BJ (cell line): ENCODE measurements at regions of chr2 and their contacts with region 1.

Region 1: GRCh38 chr2:20446917-20447436 is at the start of gene RHOB:
- DNase-seq: peak; percentile 93
- H3K4me3 ChIP-seq: peak within 1 kb of the TSS; percentile 80
- H3K27me3 ChIP-seq: no peaks in the 10 kb centered on the region
- CTCF ChIP-seq: no peak
- polyA plus RNA-seq, gene RHOB: 76.7 and 87.2 TPM in 2 replicates

Region 2: DNA sequence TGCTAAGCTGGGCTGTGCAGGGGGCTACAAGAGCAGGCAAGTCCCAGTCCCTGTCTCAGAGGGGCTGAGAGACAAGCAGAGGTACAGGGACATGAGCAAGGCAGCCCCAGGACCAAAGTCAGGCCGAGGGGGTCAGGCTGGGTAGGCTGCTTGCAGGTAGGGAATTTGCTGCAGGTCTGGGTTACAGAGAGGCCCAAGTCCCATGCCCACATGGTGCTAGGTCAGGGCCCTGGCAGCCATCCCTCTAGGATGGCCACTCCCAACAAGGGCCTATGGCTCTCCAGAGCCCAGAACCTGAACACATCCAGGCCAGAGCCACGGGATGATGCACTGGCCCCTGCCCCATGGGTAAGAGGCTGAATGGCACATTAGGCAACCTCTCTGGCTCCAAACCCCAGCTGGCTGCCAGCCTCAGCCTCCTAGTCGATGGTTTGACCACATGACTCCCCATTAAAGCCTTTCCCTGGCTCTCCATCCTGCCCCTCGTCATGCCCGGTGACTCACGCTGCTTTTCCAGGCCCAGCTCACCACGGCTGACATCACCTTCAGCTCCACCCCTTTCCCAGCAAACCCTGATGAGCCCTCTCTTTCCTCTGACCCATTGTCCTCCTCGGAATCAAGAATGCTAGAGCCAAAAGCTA is 305.7 kb before region 1 on chr2:
- CTCF ChIA-PET with region 1: no interaction called
- POLR2A ChIA-PET with region 1: no interaction called
- DNase-seq: peak; percentile 73
- H3K4me3 ChIP-seq: no peak overlapping the region
- H3K27me3 ChIP-seq: no peaks in the 10 kb centered on the region
- CTCF ChIP-seq: no peak

Region 3: DNA sequence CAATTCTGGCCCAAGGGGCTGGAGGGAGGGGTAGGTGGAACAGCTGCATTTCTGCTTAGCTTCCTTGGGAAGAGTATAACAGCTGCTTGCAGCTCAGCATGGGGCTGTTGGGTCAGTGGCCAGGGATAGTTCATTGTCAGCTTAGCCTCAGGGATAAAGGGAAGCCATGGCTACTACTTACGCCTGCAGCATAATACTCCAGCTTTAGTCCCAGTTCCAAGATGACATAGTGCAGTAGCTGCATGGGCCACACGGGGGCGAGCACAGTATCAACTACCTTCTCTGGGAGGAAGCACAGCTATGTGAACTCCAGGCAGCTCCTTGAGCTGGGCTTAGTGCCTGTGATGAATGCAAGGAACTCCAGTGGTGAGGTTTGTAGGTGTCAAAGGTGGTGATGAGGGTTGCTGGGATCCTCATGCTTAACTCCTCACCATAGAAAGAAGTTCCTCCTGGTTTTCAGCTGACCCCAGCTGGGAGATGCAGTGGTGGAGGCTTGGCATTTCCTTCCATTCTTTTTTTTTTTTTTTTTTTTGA is 35.5 kb before region 1 on chr2:
- CTCF ChIA-PET with region 1: interaction called, 48 read pairs
- POLR2A ChIA-PET with region 1: interaction called, 3 read pairs
- DNase-seq: no peak
- H3K4me3 ChIP-seq: no peak overlapping the region
- H3K27me3 ChIP-seq: peaks cover 13% of the 10 kb centered on the region
- CTCF ChIP-seq: peak; percentile 93

Region 4: DNA sequence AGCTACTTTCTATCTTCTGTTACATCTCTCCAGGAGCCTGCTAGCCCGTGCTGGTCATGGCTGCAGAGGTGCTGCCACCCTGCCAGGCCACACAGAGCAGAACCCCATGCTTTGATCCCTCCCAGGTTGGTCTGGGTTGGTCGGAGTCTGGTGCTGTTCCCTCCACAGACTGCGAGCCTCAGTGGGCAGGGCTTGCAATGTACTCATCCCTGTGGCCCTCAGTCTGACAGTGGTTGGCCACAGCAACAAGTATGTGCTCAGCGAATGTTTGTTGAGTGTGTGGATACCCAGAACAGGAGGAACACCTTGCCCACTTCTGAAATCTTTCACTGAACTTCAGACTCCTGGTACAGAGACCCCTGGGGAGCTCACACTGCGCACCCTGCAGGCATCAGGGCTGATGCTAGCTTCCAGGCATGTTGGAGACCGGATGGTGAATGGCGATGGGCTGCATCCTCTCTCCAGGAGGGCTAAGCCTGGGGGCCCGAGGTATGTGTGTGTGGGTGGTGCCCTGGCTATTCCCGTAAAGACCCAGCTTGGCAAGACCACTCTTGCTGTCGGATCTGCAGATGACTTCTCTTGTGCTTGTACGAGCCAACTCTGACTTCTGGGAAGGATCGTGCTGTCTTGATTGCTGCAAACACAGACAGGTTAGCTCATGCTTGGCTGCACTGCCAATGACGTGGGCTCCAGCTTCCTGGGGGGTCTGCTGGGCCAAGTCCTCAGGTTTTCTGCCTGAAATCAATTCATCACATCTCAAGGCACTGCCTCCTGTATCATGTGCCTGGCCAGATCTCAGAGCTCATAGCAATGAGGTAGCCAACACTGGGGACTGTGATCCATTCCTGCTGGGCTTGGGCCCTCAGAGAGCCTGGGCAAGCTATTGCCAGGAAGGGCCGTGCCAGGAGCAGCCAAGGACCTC is 43.5 kb after region 1 on chr2:
- CTCF ChIA-PET with region 1: no interaction called
- POLR2A ChIA-PET with region 1: interaction called, 15 read pairs
- DNase-seq: no peak
- H3K4me3 ChIP-seq: no peak overlapping the region
- H3K27me3 ChIP-seq: peaks cover 4% of the 10 kb centered on the region
- CTCF ChIP-seq: no peak

Region 5: GRCh38 chr2:20609349-20609994 is 162.5 kb after region 1 on chr2:
- CTCF ChIA-PET with region 1: interaction called, 6 read pairs
- POLR2A ChIA-PET with region 1: interaction called, 14 read pairs
- DNase-seq: no peak
- H3K4me3 ChIP-seq: no peak overlapping the region
- H3K27me3 ChIP-seq: no peaks in the 10 kb centered on the region
- CTCF ChIP-seq: no peak